Heart left ventricle (tissue), 16 donors: ENCODE measurements at regions of chr1 and their contacts with region 1.

Region 1: DNA sequence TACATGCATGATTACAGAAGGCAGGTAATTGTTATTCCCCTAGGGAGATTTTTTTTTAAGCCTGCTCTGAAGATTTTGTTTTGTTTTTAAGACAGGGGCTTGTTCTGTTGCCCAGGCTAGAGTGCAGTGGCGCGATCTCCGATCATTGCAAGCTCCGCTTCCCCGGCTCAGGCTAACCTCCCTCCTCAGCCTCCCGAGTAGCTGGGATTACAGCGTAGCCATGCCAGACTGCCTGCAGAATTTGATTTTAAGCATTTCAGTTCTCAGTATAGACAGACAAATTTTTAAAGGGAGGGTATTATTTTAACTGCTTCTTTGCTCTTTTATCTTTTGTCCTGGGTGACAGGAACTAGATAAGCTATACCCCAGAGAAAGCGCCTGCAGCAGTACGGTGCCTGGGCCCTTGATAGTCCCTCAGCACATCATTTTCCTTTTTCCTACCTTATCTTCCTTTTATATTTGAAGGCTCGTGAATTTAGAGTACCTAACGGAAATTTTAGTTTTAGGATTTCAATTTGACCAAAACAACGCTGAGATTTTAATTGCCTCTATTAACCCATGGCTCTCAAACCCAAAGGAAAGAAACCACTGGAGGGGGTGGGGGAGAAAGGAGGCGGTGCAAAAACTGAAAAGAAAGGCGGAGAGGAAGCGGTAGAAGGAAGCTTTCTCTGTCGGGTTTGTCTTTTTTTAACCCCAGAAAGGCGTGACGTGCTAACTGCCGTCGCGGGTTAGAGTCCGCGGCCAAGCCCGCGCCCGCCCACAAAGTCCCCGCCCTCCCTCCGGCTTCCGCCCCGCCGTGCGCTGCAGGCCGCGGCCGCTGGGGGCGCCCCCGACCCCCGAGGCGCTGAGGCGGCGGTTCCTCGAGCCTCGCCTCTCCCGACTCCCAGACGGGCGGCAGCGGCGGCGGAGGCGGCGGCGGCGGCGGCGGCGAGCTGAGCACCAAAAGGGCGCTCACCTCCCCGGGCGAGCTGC is at the start of gene EEIG2:
- DNase-seq: peak; percentile 86 to 94 (median 87)
- ATAC-seq: peak; percentile 80 to 96 (median 94)
- H3K4me3 ChIP-seq: peak within 1 kb of the TSS; percentile 58 to 85 (median 75)
- H3K27ac ChIP-seq: peak within 1 kb of the TSS in 11 of 12 donors; percentile 30 to 82 (median 67)
- H3K4me1 ChIP-seq: peaks cover 0 to 60% (median 15%) of the 10 kb centered on the region in 12 donors
- H3K27me3 ChIP-seq: no peaks in the 10 kb centered on the region
- CTCF ChIP-seq: peak; percentile 56 to 95 (median 84)
- POLR2A ChIP-seq: peak in 1 of 2 donors; percentile 53
- total RNA-seq, gene EEIG2: 3.4 to 14.1 (median 6.0) TPM

Region 2: DNA sequence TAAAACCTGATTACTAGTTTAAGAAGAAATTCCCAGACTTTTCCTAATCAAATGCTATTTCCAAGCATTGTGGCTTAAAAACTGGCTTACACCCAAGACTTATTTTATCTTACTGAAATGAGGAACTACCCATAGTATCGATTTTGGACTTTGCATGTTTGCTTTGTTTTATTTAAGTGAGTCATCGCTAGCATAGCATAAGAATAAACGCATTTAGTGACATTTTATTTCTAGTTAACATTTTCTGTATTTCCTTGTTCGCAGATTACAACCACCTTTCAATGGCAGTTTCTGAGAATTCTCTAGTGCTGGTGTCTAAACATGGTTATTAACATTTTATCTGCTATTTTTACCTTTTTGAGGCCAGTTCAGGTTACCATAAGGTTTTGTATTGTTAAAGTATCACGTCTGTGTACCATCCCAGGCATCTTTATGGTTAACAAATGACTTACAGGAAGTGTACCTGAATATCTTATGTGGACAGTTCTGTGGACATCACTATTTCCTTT is 24.9 kb after region 1 on chr1:
- intact Hi-C with region 1: loop called in 2 of 10 experiments (anchors 2 kb)
- DNase-seq: no peak
- ATAC-seq: no peak
- H3K4me3 ChIP-seq: no peak overlapping the region
- H3K27ac ChIP-seq: peak overlapping the region in 2 of 12 donors; percentile 4 to 32
- H3K4me1 ChIP-seq: peaks cover 0 to 38% (median 21%) of the 10 kb centered on the region in 12 donors
- H3K27me3 ChIP-seq: no peaks in the 10 kb centered on the region
- CTCF ChIP-seq: no peak
- POLR2A ChIP-seq: no peak

Region 3: DNA sequence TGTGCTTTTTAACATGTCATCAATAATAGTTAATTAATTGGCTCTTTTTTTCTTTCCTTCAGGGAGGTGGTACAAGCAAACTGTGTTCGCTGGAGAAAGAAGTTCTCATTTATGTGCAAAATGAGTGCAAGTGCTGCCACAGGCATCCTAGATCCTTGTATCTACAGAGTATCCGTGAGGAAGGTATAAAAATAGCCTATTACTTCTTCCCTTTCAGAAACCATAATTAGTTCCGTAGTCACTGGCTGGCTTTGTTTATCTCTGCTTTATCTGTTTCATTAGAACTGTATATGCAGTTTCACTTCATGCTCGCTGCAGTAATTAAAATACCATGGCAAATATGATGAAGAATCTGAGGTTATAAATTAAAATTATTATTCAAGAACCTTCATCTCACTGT is 41.0 kb after region 1 on chr1:
- intact Hi-C with region 1: loop called in 4 of 10 experiments (anchors 5 kb)
- DNase-seq: no peak
- ATAC-seq: peak; percentile 52 to 72 (median 62)
- H3K4me3 ChIP-seq: peak overlapping the region in 8 of 12 donors; percentile 5 to 28 (median 8)
- H3K27ac ChIP-seq: peak overlapping the region in 6 of 12 donors; percentile 10 to 42 (median 31)
- H3K4me1 ChIP-seq: peaks cover 5 to 57% (median 21%) of the 10 kb centered on the region in 12 donors
- H3K27me3 ChIP-seq: no peaks in the 10 kb centered on the region
- CTCF ChIP-seq: no peak
- POLR2A ChIP-seq: no peak

Region 4: GRCh38 chr1:108627256-108627655 is 67.8 kb after region 1 on chr1:
- intact Hi-C with region 1: loop called in 1 of 10 experiments (anchors 5 kb)
- DNase-seq: no peak
- ATAC-seq: no peak
- H3K4me3 ChIP-seq: no peak overlapping the region
- H3K27ac ChIP-seq: no peak overlapping the region
- H3K4me1 ChIP-seq: peaks cover 0 to 10% (median 0%) of the 10 kb centered on the region in 12 donors
- H3K27me3 ChIP-seq: no peaks in the 10 kb centered on the region
- CTCF ChIP-seq: no peak
- POLR2A ChIP-seq: no peak